Natural killer cell (primary cell): ENCODE measurements at regions of chr3 and their contacts with region 1.

Region 1: GRCh38 chr3:14467814-14468620 is 65.6 kb downstream of the SLC6A6 start:
- DNase-seq: peak; percentile 49 to 74
- ATAC-seq: peak; percentile 71 to 91 (median 87)
- H3K4me3 ChIP-seq: no peak overlapping the region
- H3K4me3 Mint-ChIP-seq: no peak overlapping the region
- H3K27ac ChIP-seq: no peak overlapping the region
- H3K27ac Mint-ChIP-seq: no peak overlapping the region
- H3K4me1 ChIP-seq: no peaks in the 10 kb centered on the region
- H3K4me1 Mint-ChIP-seq: no peaks in the 10 kb centered on the region
- H3K27me3 ChIP-seq: no peaks in the 10 kb centered on the region
- H3K27me3 Mint-ChIP-seq: no peaks in the 10 kb centered on the region
- CTCF ChIP-seq: peak; percentile 84

Region 2: GRCh38 chr3:14203521-14204079 is 264.4 kb before region 1 on chr3:
- intact Hi-C with region 1: loop called (anchors 1 kb)
- DNase-seq: peak in 1 of 2 donors; percentile 74
- ATAC-seq: peak; percentile 66 to 81 (median 71)
- H3K4me3 ChIP-seq: no peak overlapping the region
- H3K4me3 Mint-ChIP-seq: no peak overlapping the region
- H3K27ac ChIP-seq: no peak overlapping the region
- H3K27ac Mint-ChIP-seq: no peak overlapping the region
- H3K4me1 ChIP-seq: no peaks in the 10 kb centered on the region
- H3K4me1 Mint-ChIP-seq: peaks cover 0 to 7% of the 10 kb centered on the region in 2 donors
- H3K27me3 ChIP-seq: no peaks in the 10 kb centered on the region
- H3K27me3 Mint-ChIP-seq: no peaks in the 10 kb centered on the region
- CTCF ChIP-seq: peak; percentile 75

Region 3: GRCh38 chr3:14261229-14261628 is 206.8 kb before region 1 on chr3:
- intact Hi-C with region 1: loop called (anchors 1 kb)
- DNase-seq: peak; percentile 76 to 85
- ATAC-seq: peak; percentile 74 to 89 (median 78)
- H3K4me3 ChIP-seq: no peak overlapping the region
- H3K4me3 Mint-ChIP-seq: no peak overlapping the region
- H3K27ac ChIP-seq: no peak overlapping the region
- H3K27ac Mint-ChIP-seq: no peak overlapping the region
- H3K4me1 ChIP-seq: no peaks in the 10 kb centered on the region
- H3K4me1 Mint-ChIP-seq: no peaks in the 10 kb centered on the region
- H3K27me3 ChIP-seq: no peaks in the 10 kb centered on the region
- H3K27me3 Mint-ChIP-seq: peaks cover 0 to 11% of the 10 kb centered on the region in 2 donors
- CTCF ChIP-seq: peak; percentile 99